PC-3 (cell line): ENCODE measurements at regions of chr2 and their contacts with region 1.

Region 1: DNA sequence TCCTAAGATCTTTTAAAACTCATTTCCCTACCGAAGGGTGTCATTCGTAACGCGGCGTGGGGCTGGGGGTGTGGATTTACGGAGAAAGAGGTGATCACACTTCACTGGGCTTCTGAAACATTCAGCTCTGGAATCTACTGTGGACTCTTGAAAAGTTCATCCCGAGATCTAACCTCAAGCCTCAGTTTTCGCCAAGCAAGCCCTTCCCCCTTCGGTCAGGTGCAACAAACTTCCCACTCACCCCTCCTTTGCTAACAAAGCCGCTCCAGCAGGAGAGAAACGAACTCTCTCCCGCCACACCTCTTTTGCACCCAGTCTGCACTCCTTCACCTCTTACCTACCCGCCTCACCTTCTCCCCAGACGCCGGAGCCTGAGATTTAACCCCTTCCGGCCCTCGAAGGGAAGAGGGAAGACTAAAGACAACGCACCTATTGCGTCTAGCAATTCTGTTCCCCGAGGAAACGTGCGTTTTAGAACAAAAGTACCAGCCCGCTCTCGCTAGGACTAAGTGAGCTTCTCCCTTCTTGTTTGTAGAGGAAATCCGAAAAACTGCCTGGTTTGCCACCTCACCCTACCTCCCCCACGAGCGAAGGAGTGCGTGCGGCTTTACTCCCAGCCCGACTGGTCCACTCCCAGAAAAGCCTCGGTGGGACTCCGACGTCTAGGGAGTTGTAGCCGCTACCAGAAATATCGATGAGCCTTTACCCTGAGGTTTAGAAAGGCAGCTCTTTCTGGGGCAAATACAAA is 538 bp upstream of the PEX13 start:
- DNase-seq: peak; percentile 91
- ATAC-seq: peak; percentile 58
- H3K4me3 ChIP-seq: peak overlapping the region; percentile 95
- H3K27ac ChIP-seq: peak overlapping the region; percentile 97
- H3K4me1 ChIP-seq: peaks cover 38% of the 10 kb centered on the region
- H3K27me3 ChIP-seq: no peaks in the 10 kb centered on the region
- CTCF ChIP-seq: no peak

Region 2: DNA sequence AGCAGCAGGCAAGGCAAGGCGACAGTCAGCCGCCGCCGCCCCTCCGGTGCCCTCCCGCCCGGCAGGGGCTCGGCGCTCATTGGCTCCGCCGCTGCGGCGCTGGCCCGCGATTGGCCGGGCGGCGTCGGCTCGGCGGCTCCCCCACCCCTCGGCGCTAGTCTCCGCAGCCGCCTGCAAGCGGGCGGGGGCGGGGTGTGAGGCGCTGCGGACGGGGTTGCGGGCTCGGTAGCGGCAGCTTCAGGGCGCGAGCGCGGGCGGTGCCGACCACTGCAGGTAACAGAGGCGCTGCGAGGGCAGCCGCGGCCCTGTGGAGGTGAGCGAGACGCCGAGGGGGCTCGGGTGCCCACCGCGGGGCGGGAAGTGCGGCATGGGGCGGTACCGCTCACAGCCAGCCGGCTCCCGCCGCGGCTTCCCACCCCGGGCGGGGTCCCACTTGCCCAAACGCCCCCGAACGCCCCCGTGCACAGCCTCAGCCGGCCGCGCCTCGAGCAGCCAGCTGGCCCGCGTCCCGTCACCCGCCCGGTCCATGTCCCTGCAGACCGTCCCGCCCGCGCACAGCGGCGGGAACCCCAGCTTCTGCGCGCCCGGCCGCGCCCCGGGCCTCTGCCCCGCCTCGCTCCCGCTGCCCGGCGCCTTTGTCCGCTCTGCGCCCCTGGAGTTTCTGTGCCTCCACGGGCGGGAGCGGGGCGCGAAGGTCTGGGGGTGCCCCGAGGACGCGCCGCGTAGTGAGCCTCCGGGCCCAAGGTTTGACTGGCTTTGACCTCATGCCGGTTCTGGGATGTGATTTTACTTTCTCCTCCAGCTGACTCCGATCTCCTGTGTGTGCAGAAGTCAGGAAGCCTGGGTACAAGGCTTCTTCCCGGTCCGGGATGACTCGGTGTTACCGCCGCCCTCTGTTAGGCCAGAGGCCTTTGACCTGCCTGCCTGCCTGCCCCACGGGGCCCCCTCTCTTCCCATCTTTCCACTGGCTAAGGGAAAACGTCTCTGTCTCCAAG is 49.0 kb after region 1 on chr2 and contains the start of gene SANBR:
- CTCF ChIA-PET with region 1: no interaction called
- POLR2A ChIA-PET with region 1: no interaction called
- intact Hi-C with region 1: loop called (anchors 1 kb)
- DNase-seq: peak; percentile 94
- ATAC-seq: peak; percentile 96
- H3K4me3 ChIP-seq: peak within 1 kb of the TSS; percentile 93
- H3K27ac ChIP-seq: no peak within 1 kb of the TSS
- H3K4me1 ChIP-seq: peaks cover 6% of the 10 kb centered on the region; the same call in 1 of the 2 replicates
- H3K27me3 ChIP-seq: no peaks in the 10 kb centered on the region
- CTCF ChIP-seq: no peak
- total RNA-seq, gene SANBR: 4.8 and 6.1 TPM in 2 replicates